Activated CD8-positive, alpha-beta T cell treated with anti-CD3 and anti-CD28 coated beads for 36 hours (primary cell): ENCODE measurements at regions of chr11 and their contacts with region 1.

Region 1: GRCh38 chr11:128956401-128957201 is 13.9 kb upstream of the TP53AIP1 start:
- DNase-seq: peak; percentile 21
- ATAC-seq: peak; percentile 55
- H3K4me3 Mint-ChIP-seq: no peak overlapping the region
- H3K27ac Mint-ChIP-seq: no peak overlapping the region
- H3K4me1 Mint-ChIP-seq: peaks cover 2% of the 10 kb centered on the region
- H3K27me3 Mint-ChIP-seq: peaks cover 6% of the 10 kb centered on the region
- CTCF ChIP-seq: peak; percentile 87

Region 2: DNA sequence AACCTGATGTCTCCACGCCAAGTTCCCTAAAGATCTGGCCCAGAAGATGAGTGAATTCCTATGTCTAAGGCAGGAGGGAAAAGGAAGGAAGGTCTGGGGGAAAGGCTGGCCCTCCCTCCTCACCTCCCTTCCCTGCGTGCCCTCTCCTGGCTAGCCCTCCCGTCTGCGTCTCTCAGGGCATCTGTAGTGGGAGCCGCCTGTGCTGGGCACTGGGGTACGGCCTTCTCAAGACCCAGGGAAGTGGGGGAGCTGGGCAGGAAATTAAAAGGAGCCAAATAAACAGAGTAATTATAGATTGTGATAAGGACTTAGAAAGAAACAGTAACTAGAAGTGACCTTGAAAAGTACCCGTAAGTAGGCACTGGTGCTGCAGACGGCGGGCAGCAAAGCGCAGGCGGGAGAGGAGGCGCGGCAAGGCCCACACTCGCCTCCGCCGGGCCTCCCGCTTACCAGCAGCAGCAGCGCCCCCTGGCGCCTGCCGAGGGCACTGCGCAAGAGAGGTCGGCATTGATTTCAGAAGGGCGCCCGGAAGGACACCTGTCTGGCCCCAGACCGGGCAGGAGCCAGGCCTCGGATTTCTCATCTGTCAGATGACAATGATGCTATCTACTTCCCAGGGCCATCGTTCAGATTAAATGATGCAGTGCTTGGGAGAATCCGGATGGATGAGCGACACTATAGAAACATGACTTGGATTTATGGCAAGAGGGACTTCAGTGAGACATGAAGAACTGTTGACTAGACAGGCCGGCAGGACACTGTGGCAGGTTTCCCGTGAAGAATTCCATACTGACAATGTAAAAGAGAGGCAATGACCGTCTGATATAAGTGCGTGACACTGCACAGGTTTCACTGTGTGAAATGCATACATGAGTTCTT is 96.8 kb before region 1 on chr11:
- CTCF ChIA-PET with region 1: no interaction called
- POLR2A ChIA-PET with region 1: no interaction called
- intact Hi-C with region 1: no loop called
- DNase-seq: peak; percentile 87
- ATAC-seq: peak; percentile 98
- H3K4me3 Mint-ChIP-seq: no peak overlapping the region
- H3K27ac Mint-ChIP-seq: no peak overlapping the region
- H3K4me1 Mint-ChIP-seq: no peaks in the 10 kb centered on the region
- H3K27me3 Mint-ChIP-seq: peaks cover 1% of the 10 kb centered on the region
- CTCF ChIP-seq: peak; percentile 98

Region 3: DNA sequence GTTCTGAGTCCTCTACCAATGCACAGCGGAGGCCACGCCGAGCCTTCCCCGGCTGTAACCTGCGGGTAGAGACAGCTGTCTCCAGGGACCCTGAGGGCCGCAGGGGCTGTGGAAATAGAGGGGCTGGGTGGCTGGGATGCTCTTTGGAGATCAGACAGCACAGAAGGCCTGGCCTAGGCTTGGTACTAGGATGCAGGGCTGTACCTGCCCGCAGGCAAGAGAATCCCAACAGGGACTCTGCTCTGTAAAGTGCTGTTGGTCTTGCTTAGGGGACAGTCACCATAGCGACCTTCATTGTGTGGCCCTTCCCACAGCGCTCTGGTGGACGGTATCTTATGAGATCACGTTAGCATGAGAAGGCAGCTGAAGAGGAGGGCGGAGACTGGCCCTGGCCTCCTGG is 76.8 kb before region 1 on chr11:
- CTCF ChIA-PET with region 1: interaction called, 283 read pairs
- POLR2A ChIA-PET with region 1: no interaction called
- intact Hi-C with region 1: no loop called
- DNase-seq: no peak
- ATAC-seq: no peak
- H3K4me3 Mint-ChIP-seq: no peak overlapping the region
- H3K27ac Mint-ChIP-seq: no peak overlapping the region
- H3K4me1 Mint-ChIP-seq: no peaks in the 10 kb centered on the region
- H3K27me3 Mint-ChIP-seq: peaks cover 19% of the 10 kb centered on the region
- CTCF ChIP-seq: no peak

Region 4: GRCh38 chr11:128890543-128891368 is 65.8 kb before region 1 on chr11 and contains the start of gene KCNJ5:
- CTCF ChIA-PET with region 1: interaction called, 283 read pairs
- POLR2A ChIA-PET with region 1: interaction called, 3 read pairs
- intact Hi-C with region 1: loop called (anchors 1 kb)
- DNase-seq: no peak
- ATAC-seq: peak; percentile 11
- H3K4me3 Mint-ChIP-seq: peak within 1 kb of the TSS; percentile 61
- H3K27ac Mint-ChIP-seq: no peak within 1 kb of the TSS
- H3K4me1 Mint-ChIP-seq: peaks cover 6% of the 10 kb centered on the region
- H3K27me3 Mint-ChIP-seq: peaks cover 55% of the 10 kb centered on the region
- CTCF ChIP-seq: no peak
- total RNA-seq, gene KCNJ5: not detected

Region 5: DNA sequence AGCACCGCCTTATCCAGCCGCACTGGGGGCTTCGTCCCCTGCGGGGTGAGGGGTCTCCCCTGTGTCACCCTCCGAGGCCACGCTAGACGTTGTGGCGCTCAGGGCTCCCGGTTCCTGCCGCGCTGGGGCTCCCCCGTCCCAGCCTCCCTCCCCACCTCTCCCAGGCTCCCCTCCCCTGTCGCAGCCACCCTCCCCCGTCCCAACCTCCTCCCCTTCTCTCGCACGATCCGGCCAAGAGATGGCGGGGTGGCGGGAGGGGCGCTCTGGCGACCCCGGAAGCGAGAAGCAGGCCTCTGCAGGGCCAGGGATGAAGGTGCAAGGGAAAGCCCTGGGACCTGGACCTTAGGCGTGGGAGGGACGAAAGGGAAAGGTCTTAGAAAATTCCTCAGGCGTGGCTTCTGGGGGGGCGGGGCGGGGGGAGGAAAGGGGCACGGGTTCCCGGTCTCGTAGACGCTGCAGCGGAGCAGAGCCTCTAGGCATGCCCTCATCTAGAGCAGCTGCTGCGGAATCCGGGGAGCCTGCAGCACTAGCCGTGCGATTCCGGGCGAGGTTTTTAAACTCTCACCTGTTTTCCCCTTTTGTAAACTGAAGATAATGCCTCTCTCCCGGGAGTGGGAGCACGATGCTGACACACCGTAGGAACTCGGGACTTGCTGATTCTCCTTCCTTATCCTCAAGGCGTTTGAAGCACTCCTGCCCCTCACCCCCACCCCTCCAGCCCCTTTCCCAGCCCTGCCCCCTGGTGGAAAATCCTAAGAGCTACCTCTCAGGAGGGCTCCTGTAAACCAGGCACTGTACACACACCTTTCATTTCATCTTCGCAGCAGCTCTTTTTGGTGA is 51.0 kb before region 1 on chr11:
- CTCF ChIA-PET with region 1: interaction called, 37 read pairs
- POLR2A ChIA-PET with region 1: no interaction called
- intact Hi-C with region 1: no loop called
- DNase-seq: peak; percentile 48
- ATAC-seq: peak; percentile 75
- H3K4me3 Mint-ChIP-seq: peak overlapping the region; percentile 68
- H3K27ac Mint-ChIP-seq: no peak overlapping the region
- H3K4me1 Mint-ChIP-seq: peaks cover 12% of the 10 kb centered on the region
- H3K27me3 Mint-ChIP-seq: peaks cover 27% of the 10 kb centered on the region
- CTCF ChIP-seq: peak; percentile 44

Region 6: GRCh38 chr11:128936606-128937251 is 19.9 kb before region 1 on chr11:
- CTCF ChIA-PET with region 1: interaction called, 17 read pairs
- POLR2A ChIA-PET with region 1: no interaction called
- intact Hi-C with region 1: no loop called
- DNase-seq: no peak
- ATAC-seq: no peak
- H3K4me3 Mint-ChIP-seq: no peak overlapping the region
- H3K27ac Mint-ChIP-seq: no peak overlapping the region
- H3K4me1 Mint-ChIP-seq: no peaks in the 10 kb centered on the region
- H3K27me3 Mint-ChIP-seq: no peaks in the 10 kb centered on the region
- CTCF ChIP-seq: no peak